BJ (cell line): ENCODE measurements at regions of chr12 and their contacts with region 1.

Region 1: DNA sequence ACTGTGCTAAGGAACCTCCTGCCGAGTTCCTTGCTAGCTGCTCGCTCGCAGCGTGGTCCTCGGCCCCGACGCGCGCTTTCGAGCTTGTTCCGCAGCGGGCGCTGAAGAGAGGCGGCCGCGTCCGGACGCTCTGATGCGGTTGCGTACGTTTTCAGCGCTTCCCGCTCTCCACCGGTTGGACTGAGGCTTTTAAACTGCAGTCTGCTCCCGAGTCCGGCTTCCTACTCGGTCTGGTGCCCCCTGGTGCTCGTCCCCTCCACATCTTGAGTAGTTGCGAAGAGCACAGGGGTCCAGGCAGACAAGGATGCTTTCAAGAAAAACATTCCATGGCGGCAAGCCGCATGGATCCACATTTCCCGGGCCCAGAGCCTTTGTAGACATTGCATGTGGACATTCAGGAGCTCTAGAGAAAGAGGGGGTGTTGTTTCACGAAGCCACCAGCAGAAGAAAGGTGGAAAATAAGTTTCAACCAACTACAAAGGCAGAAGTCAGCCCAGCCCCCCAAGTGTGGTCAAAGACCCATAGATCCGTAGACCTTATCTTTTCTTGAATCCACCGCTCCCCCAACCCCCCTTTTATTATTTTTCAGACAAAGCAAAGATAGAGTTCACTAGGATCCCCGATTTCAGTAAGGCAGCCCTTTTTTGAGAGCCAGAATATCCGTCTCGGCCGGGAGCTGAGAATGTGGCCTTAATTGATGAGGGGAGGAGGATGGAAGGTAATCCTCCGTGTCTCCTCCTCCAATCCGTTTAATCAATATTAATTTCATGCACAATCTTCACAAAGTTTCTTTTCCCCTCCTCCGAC is 984 bp upstream of the WNK1 start:
- DNase-seq: peak; percentile 74
- H3K4me3 ChIP-seq: peak overlapping the region; percentile 36
- H3K27me3 ChIP-seq: no peaks in the 10 kb centered on the region
- CTCF ChIP-seq: peak; percentile 88

Region 2: GRCh38 chr12:278046-278445 is 473.3 kb before region 1 on chr12:
- CTCF ChIA-PET with region 1: no interaction called
- POLR2A ChIA-PET with region 1: no interaction called
- DNase-seq: no peak
- H3K4me3 ChIP-seq: no peak overlapping the region
- H3K27me3 ChIP-seq: no peaks in the 10 kb centered on the region
- CTCF ChIP-seq: no peak

Region 3: DNA sequence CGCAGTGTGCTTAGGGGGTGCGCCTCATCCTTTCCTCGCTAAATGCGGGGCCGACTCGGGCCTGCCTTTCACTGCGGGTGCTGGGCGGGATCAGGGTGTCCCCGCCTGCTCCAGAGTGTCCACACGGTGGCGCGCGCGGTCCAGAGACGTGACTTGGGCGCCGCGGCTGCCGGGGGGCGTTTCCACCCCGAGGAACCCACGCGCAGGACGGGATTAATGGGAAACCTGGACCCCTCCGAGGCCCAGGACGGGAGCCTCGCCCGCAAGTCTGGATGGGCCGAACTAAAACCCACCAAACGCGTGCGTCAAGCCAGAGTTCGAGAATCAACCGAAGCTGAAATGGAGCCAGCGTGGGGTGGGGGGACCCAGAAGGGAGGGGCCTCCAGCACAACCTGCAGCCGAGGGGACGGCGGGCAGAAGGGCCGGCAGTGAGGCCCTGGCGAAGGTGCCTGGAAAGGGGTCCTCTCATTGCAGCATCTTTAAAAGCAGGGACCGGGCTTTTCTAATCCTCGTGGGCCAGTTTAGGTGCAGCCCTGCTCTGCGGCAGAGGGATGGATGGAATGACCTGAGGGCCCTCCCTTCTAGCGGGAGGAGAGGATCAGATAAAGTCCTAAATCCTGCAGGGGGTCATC is 181.5 kb before region 1 on chr12:
- CTCF ChIA-PET with region 1: interaction called, 97 read pairs
- POLR2A ChIA-PET with region 1: interaction called, 13 read pairs
- DNase-seq: no peak
- H3K4me3 ChIP-seq: peak overlapping the region; percentile 59
- H3K27me3 ChIP-seq: no peaks in the 10 kb centered on the region; the same call in 1 of the 2 replicates
- CTCF ChIP-seq: peak; percentile 94

Region 4: GRCh38 chr12:575948-576612 is 175.3 kb before region 1 on chr12:
- CTCF ChIA-PET with region 1: interaction called, 97 read pairs
- POLR2A ChIA-PET with region 1: interaction called, 13 read pairs
- DNase-seq: no peak
- H3K4me3 ChIP-seq: no peak overlapping the region
- H3K27me3 ChIP-seq: no peaks in the 10 kb centered on the region
- CTCF ChIP-seq: peak; percentile 83

Region 5: DNA sequence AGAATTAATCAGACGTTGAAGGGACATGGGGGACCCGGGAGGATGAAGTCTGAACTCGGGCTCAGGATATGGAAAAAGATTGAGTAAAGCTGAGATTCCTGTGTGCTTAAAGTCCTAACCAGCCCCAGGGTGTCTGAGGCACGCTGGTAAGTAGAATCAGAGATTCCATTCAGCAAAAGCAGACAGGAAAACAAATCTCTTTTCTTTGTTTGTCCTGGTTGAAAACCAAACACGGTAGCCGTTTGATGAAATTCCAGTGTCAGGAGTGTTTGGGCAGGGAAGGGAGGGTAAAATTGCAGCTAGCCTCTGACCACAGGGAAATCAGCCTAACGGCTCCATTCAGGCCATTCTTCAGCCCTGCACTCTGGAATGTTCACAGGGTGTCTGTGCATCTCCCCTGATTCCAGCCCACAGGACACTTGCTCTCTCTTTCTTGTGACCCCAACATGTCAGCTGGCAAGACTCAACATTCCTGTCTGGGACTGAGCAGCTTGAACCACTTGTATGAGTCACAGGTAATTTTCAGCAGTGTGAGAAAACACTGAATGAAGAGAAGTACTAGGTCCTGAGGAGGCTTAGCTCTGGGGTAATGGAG is 119.2 kb before region 1 on chr12:
- CTCF ChIA-PET with region 1: interaction called, 6 read pairs
- POLR2A ChIA-PET with region 1: interaction called, 20 read pairs
- DNase-seq: peak; percentile 88
- H3K4me3 ChIP-seq: no peak overlapping the region
- H3K27me3 ChIP-seq: no peaks in the 10 kb centered on the region
- CTCF ChIP-seq: no peak

Region 6: GRCh38 chr12:740896-741295 is 10.5 kb before region 1 on chr12:
- CTCF ChIA-PET with region 1: interaction called, 16 read pairs
- POLR2A ChIA-PET with region 1: no interaction called
- DNase-seq: no peak
- H3K4me3 ChIP-seq: no peak overlapping the region
- H3K27me3 ChIP-seq: peaks cover 2% of the 10 kb centered on the region
- CTCF ChIP-seq: no peak

Region 7: GRCh38 chr12:818733-819132 is 67.3 kb after region 1 on chr12:
- CTCF ChIA-PET with region 1: interaction called, 42 read pairs
- POLR2A ChIA-PET with region 1: interaction called, 4 read pairs
- DNase-seq: no peak
- H3K4me3 ChIP-seq: no peak overlapping the region
- H3K27me3 ChIP-seq: no peaks in the 10 kb centered on the region
- CTCF ChIP-seq: no peak

Region 8: GRCh38 chr12:851913-852312 is 100.5 kb after region 1 on chr12:
- CTCF ChIA-PET with region 1: interaction called, 4 read pairs
- POLR2A ChIA-PET with region 1: interaction called, 10 read pairs
- DNase-seq: peak; percentile 23
- H3K4me3 ChIP-seq: no peak overlapping the region
- H3K27me3 ChIP-seq: no peaks in the 10 kb centered on the region
- CTCF ChIP-seq: no peak

Region 9: GRCh38 chr12:1122786-1123185 is 371.4 kb after region 1 on chr12:
- CTCF ChIA-PET with region 1: no interaction called
- POLR2A ChIA-PET with region 1: no interaction called
- DNase-seq: no peak
- H3K4me3 ChIP-seq: no peak overlapping the region
- H3K27me3 ChIP-seq: no peaks in the 10 kb centered on the region
- CTCF ChIP-seq: no peak